ENCODE measurements at regions of chr6 and their contacts with region 1.

Region 1: DNA sequence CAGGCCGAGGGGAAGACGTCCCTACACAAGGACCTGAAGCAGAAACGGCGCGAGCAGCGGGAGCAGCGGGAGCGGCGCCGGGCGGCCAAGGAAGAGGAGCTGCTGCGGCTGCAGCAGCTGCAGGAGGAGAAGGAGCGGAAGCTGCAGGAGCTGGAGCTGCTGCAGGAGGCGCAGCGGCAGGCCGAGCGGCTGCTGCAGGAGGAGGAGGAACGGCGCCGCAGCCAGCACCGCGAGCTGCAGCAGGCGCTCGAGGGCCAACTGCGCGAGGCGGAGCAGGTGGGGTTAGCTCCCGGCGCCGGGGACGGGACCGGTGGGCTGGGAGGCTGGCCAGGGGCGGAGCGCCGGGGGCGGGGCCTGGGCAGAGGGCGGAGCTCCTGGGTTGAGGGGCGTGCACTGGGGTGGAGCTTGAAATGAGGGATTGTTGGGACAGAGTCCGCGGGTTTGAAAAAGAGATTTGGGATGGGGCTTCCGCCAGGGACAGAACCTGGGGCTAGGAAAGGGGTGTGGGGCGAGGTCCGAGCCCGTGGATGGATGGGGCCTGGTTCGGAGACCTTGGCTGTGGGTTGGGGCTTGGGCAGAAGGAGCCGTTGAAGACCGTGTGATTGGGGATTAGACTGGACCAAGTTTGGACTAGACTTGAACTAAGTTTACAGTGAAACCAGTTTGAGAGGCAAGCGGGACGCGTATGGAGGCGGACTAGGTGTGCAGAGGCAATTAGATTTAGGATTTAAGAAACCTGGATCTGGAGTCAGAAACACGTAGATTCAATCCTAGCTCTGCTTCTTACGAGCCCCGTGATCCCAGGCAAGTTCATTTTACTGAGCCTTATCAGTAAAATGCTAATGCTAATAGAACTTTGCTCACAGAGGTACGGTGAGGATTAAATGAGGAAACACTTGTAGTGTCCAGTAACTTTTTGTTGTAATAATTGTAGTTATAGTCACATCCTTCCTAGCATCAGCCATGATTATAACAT is 20.9 kb downstream of the DEF6 start:
- DNase-seq: peak; percentile 80 to 88
- ATAC-seq: peak; percentile 98 to 99 (median 99)
- H3K4me3 ChIP-seq: peak overlapping the region; percentile 40 to 82 (median 56)
- H3K27ac ChIP-seq: peak overlapping the region in 4 of 10 donors; percentile 30 to 58 (median 48)
- H3K4me1 ChIP-seq: peaks cover 0 to 16% (median 10%) of the 10 kb centered on the region in 9 donors
- H3K27me3 ChIP-seq: no peaks in the 10 kb centered on the region
- CTCF ChIP-seq: peak in 3 of 9 donors; percentile 20 to 35 (median 21)

Region 2: DNA sequence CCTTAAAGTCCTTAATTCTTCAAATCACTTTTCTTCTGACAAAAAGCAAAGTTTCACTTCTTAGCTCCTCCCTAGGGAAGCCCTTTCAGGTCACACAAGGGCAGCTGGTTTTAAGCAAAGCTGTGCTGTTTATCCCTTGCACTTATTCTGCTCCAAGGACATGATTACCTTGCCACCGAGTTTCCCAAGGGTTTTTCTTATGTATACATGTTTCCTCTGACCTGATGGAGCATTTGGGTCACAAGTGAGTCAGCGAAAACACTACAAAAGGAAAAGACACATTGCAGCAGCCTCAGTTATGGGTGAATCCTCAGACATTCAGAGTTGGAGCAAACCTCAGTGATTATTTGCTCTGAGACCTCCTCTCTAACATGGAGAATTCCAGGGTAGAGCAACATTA is 595.3 kb before region 1 on chr6:
- intact Hi-C with region 1: no loop called
- DNase-seq: no peak
- ATAC-seq: no peak
- H3K4me3 ChIP-seq: no peak overlapping the region
- H3K27ac ChIP-seq: no peak overlapping the region
- H3K4me1 ChIP-seq: peaks cover 0 to 4% (median 0%) of the 10 kb centered on the region in 9 donors
- H3K27me3 ChIP-seq: no peaks in the 10 kb centered on the region
- CTCF ChIP-seq: no peak

Region 3: GRCh38 chr6:35624341-35625070 is 306.0 kb after region 1 on chr6:
- intact Hi-C with region 1: loop called in 1 of 10 experiments (anchors 5 kb)
- DNase-seq: no peak
- ATAC-seq: peak in 1 of 8 donors; percentile 23
- H3K4me3 ChIP-seq: no peak overlapping the region
- H3K27ac ChIP-seq: peak overlapping the region in 2 of 10 donors; percentile 62 to 69
- H3K4me1 ChIP-seq: peaks cover 0 to 63% (median 0%) of the 10 kb centered on the region in 9 donors
- H3K27me3 ChIP-seq: no peaks in the 10 kb centered on the region
- CTCF ChIP-seq: peak in 8 of 9 donors; percentile 10 to 51 (median 31)

Region 4: DNA sequence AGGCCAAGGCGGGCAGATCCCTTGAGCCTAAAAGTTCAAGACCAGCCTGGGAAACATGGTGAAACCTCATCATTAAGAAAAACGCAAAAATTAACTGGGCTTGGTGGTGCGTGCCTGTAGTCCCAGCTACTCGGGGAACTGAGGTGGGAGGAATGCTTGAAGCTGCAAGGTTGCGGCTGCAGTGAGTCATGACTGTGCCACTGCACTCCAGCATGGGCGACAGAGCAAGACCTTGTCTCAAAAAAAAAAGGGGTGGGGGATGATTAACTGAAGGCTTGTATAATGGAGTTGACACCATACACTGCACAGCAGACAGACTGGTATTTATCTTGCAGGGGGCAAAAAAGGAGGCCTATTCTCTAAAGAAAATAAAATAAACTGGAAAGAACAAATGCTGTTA is 574.8 kb after region 1 on chr6:
- intact Hi-C with region 1: no loop called
- DNase-seq: no peak
- ATAC-seq: no peak
- H3K4me3 ChIP-seq: no peak overlapping the region
- H3K27ac ChIP-seq: no peak overlapping the region
- H3K4me1 ChIP-seq: peaks cover 0 to 4% (median 0%) of the 10 kb centered on the region in 9 donors
- H3K27me3 ChIP-seq: no peaks in the 10 kb centered on the region
- CTCF ChIP-seq: no peak